ENCODE measurements at regions of chr11 and their contacts with region 1.

Region 1: DNA sequence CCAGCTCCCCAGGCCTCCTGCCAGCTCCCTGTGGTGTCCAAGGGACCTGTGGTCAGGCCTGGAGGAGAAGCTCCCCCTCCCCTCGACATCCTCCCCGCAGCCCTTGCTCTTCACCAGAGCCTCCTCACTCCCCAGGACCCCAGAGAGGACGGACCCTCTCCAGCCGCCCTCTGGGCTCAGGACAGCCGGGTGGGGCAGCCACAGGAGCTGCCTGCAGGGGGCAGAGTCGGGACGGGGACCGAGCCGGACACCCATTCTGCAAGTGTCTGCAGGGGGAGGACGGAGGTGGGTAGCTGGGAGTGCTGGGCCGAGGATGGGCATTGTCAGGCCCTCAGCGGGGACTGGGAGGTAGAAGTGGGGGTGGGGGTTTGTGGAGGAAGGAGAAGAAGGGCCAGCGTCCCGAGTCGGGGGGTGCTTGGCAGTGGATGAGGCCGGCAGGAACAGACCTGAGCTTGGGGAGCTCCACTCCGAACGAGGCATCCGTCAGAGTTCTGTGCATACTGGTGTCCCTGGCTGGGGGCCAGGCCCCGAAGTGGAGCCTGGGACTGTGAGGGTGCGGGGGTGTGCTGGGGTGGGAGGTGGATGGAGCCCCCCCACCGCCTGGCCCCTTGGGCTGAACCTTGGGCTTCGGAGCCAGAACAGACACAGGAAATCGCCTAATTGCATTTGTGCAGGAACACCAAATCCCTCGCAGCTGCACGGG is 15.2 kb downstream of the PRR33 start:
- DNase-seq: peak; percentile 25 to 84
- H3K4me3 ChIP-seq: no peak overlapping the region
- H3K27ac ChIP-seq: no peak overlapping the region
- H3K4me1 ChIP-seq: no peaks in the 10 kb centered on the region; a peak in 1 of 7 replicates
- H3K27me3 ChIP-seq: no peaks in the 10 kb centered on the region
- CTCF ChIP-seq: peak; percentile 73 to 78 (median 75)
- EP300 ChIP-seq: no peak
- POLR2A ChIP-seq: no peak
- RAD21 ChIP-seq: peak; percentile 48 to 63; a peak in 3 of 4 replicates

Region 2: DNA sequence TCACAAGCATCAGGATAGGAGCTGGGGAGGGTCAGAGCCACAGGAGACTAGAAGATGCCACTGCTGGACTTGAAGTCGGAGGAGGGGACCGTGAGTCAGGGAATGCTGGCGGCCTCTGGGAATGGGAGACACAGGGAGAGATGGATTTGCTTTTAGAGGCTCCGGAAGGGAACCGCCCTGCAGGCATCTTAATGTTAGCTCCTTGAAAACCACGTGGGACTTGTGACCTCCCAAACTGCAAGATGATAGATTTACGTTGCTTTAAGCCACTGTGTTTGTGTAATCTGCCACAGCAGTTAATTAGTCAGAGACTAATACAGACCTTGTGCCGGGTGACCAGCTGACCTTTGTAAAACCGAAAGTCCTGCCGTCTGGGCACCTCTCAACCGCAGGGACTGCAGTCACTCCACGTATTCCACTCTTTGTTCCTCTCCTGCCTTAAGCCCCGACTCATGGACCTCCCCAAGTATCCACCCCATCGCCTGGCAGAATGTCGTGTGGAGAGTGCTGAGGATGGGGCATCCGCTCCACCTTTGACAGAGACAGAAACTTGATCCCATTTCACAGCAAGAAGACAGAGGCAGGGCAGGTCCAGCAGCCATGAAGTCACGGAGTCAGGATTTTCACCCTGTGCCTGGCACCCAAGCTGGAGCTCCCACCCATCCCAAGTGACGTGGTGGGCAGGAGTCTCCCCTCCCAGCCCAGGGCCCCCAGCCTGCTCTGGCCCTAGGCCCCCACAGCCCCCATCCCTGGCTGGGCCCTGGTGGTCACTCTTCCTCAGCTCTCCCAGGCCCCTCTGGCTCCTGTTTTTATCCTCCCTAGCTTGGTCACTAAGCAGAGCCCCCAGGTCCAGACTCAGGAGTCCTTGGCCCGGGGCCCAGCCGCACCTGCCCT is 93.4 kb before region 1 on chr11:
- CTCF ChIA-PET with region 1: no interaction called
- POLR2A ChIA-PET with region 1: no interaction called
- DNase-seq: no peak
- H3K4me3 ChIP-seq: no peak overlapping the region
- H3K27ac ChIP-seq: no peak overlapping the region
- H3K4me1 ChIP-seq: peaks cover 2 to 15% (median 4%) of the 10 kb centered on the region in 4 experiments; a peak in 6 of 7 replicates
- H3K27me3 ChIP-seq: peaks cover 0 to 3% (median 0%) of the 10 kb centered on the region in 4 experiments; a peak in 3 of 7 replicates
- CTCF ChIP-seq: no peak
- EP300 ChIP-seq: no peak
- POLR2A ChIP-seq: no peak
- RAD21 ChIP-seq: no peak

Region 3: GRCh38 chr11:1817511-1817910 is 59.0 kb before region 1 on chr11:
- CTCF ChIA-PET with region 1: no interaction called
- POLR2A ChIA-PET with region 1: no interaction called
- DNase-seq: no peak
- H3K4me3 ChIP-seq: no peak overlapping the region
- H3K27ac ChIP-seq: no peak overlapping the region
- H3K4me1 ChIP-seq: no peaks in the 10 kb centered on the region
- H3K27me3 ChIP-seq: no peaks in the 10 kb centered on the region; a peak in 1 of 7 replicates
- CTCF ChIP-seq: no peak
- EP300 ChIP-seq: no peak
- POLR2A ChIP-seq: no peak
- RAD21 ChIP-seq: no peak

Region 4: DNA sequence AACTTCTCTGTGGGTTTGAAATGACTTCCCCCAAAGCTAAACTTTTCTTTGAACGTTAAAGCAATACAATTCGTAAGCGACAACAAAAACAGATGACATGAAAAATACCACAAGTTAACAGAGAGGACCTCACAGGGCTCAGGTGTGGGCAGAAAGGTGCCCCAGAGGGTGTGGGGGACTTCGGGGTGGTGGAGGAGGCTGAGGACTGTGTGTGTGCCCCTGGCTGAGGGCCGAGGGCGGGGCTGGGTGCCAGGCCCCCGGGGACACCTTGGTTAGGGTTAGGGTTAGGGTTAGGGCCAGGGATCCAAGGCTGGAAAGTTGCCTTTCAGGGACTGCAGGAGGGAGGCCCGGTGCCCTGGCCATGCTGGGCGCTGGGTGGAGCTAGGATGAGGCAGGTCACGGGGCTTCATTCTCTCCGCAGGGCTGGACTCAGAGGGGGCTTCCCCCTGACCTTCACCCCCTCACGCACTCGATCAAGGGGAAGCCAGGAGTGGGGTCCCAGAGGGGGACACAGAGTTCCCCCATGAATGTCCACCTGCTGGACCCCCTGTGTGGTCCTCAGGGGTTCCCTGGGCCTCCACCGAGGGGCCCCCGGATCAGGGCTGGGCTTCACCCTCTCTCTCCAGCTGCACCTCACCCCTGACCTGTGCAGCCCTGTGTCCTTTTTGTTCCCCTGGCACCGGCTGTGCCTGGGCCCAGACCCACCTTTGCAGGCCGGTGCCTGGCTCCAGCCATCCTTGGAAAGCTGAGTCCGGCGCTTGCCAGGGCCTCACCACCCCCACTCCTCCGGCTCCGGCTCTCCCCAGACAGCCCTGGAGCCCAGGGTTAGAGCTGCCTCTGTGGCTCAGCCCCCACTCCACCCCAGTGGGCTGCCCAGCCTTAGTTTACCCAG is 30.7 kb before region 1 on chr11:
- CTCF ChIA-PET with region 1: interaction called, 19 read pairs
- POLR2A ChIA-PET with region 1: no interaction called
- DNase-seq: no peak
- H3K4me3 ChIP-seq: no peak overlapping the region
- H3K27ac ChIP-seq: no peak overlapping the region
- H3K4me1 ChIP-seq: peaks cover 0 to 3% (median 0%) of the 10 kb centered on the region in 4 experiments; a peak in 1 of 7 replicates
- H3K27me3 ChIP-seq: no peaks in the 10 kb centered on the region
- CTCF ChIP-seq: no peak
- EP300 ChIP-seq: no peak
- POLR2A ChIP-seq: no peak
- RAD21 ChIP-seq: no peak

Region 5: DNA sequence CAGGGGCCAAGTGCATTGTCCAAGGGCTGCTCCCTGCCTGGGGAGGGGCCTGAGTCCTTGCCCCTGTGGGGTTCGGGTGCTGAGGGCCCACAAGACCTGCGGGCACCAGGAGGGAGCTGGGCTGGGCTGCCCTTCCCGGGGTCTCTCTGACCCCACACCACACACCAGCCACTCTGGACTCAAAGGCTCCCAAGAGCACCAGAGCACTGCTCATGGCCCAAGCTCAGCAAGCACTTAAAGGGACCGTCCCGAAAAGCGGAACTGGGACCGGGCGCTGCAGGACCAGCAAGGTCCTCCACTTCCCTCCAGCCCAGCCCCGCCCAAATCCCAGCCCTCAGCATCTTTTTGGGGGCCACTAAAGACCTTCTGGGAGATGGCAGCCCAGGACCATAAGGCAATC is 18.4 kb before region 1 on chr11:
- CTCF ChIA-PET with region 1: interaction called, 21 read pairs
- POLR2A ChIA-PET with region 1: interaction called, 4 read pairs
- DNase-seq: no peak
- H3K4me3 ChIP-seq: no peak overlapping the region
- H3K27ac ChIP-seq: no peak overlapping the region
- H3K4me1 ChIP-seq: peaks cover 0 to 6% (median 0%) of the 10 kb centered on the region in 4 experiments; a peak in 3 of 7 replicates
- H3K27me3 ChIP-seq: no peaks in the 10 kb centered on the region; a peak in 1 of 7 replicates
- CTCF ChIP-seq: no peak
- EP300 ChIP-seq: no peak
- POLR2A ChIP-seq: no peak
- RAD21 ChIP-seq: no peak

Region 6: DNA sequence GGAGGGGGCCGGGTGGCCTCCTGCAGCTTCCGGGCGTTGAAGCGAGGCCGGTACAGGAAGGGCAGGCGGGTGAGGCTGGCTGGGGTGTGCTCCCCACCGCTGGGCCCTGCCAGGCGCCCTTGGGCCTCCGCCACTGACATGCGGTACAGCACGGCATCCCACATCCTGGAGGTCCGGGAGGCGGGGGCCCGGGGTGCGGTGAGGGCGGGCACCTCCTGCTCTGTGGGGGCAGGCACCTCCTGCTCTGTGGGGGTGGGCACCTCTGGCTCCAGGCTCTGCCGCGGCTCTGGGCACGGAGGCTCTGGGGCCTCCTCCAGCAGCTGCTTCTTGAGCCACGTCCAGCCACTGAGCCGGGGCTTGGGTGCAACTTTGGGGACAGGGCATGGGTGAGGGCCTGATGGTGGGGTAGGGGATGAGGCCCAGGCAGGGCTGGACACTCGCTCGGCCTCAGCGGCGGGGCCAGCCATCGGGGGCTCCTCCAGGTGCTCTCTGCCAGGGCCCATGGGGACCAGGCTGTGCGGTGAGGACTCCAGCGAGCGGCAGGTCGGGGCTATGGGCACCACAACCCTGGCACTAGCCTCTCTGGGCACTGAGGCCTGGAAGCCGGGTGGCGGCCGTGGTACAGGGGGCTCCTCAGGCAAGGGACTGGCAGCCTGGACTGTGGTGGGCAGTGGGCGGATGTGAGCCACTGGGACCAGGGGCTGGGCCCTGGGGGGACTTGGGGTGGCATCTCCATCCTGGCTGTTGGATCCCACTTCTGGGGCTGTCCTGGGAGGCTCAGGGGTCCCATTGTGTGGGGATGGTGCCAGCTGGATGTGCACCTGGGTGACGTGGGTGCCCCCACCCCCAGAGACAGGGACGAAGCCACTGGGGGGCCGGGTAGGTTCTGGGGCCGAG is 13.0 kb after region 1 on chr11:
- CTCF ChIA-PET with region 1: interaction called, 21 read pairs
- POLR2A ChIA-PET with region 1: no interaction called
- DNase-seq: no peak
- H3K4me3 ChIP-seq: no peak overlapping the region
- H3K27ac ChIP-seq: no peak overlapping the region
- H3K4me1 ChIP-seq: no peaks in the 10 kb centered on the region
- H3K27me3 ChIP-seq: no peaks in the 10 kb centered on the region
- CTCF ChIP-seq: no peak
- EP300 ChIP-seq: no peak
- POLR2A ChIP-seq: no peak
- RAD21 ChIP-seq: no peak

Region 7: DNA sequence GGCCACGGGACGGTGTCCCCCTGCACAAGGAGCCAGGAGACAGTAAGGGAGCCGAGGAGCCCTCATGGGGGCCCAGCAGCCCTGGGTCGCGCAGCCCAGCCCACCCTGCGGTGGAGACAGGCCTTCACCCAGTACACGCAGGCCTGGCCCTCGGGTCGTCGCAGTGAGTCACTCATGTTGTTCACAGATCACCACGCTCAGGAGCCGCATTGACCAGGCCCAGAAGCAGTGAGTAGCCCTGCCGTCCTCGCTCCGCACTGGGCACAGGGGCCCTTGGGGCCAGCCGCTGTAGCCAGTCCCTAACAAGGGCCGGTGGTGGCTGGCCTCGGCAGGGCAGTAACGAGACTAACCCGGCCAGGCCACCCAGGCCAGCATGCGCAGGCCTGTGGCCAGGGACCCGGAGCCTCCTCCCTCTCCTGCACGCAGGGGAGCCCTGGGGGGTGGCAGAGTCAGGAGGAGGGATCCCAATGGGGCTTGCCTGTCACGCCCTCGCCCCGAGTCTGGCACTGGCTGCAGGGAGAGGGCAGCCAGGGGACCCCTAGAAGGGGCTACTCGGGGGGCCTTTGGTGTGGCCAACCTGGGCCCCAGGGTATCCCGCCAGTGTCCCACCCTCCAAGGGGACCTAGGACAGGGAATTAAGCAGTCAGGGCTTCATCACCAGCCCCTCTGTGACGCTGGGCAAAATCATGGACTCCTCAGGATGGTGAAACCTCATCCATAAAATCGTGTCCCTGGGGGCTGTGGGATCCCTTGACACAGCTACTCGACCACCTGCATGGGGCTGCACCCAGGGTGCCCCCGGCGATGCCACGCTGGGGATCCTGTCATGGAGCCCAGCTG is 60.5 kb after region 1 on chr11:
- CTCF ChIA-PET with region 1: interaction called, 16 read pairs
- POLR2A ChIA-PET with region 1: no interaction called
- DNase-seq: peak in 1 of 2 experiments; percentile 49
- H3K4me3 ChIP-seq: no peak overlapping the region
- H3K27ac ChIP-seq: no peak overlapping the region
- H3K4me1 ChIP-seq: peaks cover 0 to 3% (median 0%) of the 10 kb centered on the region in 4 experiments; a peak in 1 of 7 replicates
- H3K27me3 ChIP-seq: no peaks in the 10 kb centered on the region
- CTCF ChIP-seq: no peak
- EP300 ChIP-seq: no peak
- POLR2A ChIP-seq: no peak
- RAD21 ChIP-seq: no peak

Region 8: DNA sequence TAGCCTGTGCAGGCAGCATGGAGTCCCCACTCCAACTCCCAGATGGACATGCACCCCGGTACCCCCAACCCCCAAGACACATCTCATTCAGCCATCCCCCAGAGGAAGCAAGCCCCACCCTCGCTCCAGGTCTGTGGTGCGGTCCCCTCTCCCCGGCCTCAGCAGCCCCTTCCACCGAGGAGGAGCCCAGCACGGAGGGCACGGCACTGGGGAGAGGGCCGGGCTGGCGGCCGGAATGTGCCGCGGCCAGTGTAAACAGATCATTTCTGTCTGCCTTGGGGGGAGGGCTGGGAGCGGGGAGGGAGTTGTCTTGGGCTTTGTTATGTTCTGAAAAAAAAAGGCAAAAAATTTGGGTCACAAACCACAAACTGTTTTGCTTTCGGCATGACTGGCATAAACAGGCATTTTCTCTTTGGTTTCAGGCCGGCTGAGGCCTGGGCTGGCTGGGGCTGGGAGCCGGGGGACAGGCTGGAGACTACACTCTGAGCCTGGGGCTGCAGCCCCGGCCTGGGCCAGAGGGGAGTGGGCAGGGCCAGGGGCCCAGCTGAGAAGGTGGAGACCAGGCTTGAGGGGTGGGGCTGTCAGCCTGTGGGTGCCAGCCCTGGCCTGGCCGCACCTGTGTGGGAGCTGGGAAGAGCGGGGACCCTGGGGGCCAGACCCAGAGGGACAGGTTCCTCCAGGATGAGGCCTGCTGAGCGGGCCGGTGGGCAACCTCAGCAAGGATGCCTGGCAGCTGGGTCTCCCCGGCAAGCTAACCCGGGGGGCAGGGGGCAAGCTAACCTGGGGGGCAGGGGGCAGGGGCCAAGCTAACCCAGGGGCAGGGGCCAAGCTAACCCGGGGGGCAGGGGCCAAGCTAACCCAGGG is 245.9 kb after region 1 on chr11:
- CTCF ChIA-PET with region 1: no interaction called
- POLR2A ChIA-PET with region 1: no interaction called
- DNase-seq: peak in 1 of 2 experiments; percentile 47
- H3K4me3 ChIP-seq: no peak overlapping the region
- H3K27ac ChIP-seq: no peak overlapping the region
- H3K4me1 ChIP-seq: peaks cover 0 to 5% (median 0%) of the 10 kb centered on the region in 4 experiments; a peak in 1 of 7 replicates
- H3K27me3 ChIP-seq: no peaks in the 10 kb centered on the region; a peak in 1 of 7 replicates
- CTCF ChIP-seq: no peak
- EP300 ChIP-seq: no peak
- POLR2A ChIP-seq: no peak
- RAD21 ChIP-seq: no peak